ENCODE measurements at regions of chr3 and their contacts with region 1.

Region 1: GRCh38 chr3:79339846-79340245 is 428.0 kb downstream of the ROBO1 start:
- DNase-seq: no peak
- H3K4me3 ChIP-seq: no peak overlapping the region
- H3K27ac ChIP-seq: no peak overlapping the region
- H3K4me1 ChIP-seq: no peaks in the 10 kb centered on the region
- H3K27me3 ChIP-seq: no peaks in the 10 kb centered on the region
- CTCF ChIP-seq: no peak
- EP300 ChIP-seq: no peak
- POLR2A ChIP-seq: no peak

Region 2: GRCh38 chr3:79369306-79369705 is 29.5 kb after region 1 on chr3:
- intact Hi-C with region 1: no loop called
- DNase-seq: no peak
- H3K4me3 ChIP-seq: no peak overlapping the region
- H3K27ac ChIP-seq: no peak overlapping the region
- H3K4me1 ChIP-seq: no peaks in the 10 kb centered on the region
- H3K27me3 ChIP-seq: no peaks in the 10 kb centered on the region
- CTCF ChIP-seq: no peak
- EP300 ChIP-seq: no peak
- POLR2A ChIP-seq: no peak

Region 3: GRCh38 chr3:79473993-79474392 is 134.1 kb after region 1 on chr3:
- intact Hi-C with region 1: loop called in 1 of 4 experiments (anchors 5 kb)
- DNase-seq: no peak
- H3K4me3 ChIP-seq: no peak overlapping the region
- H3K27ac ChIP-seq: no peak overlapping the region
- H3K4me1 ChIP-seq: no peaks in the 10 kb centered on the region
- H3K27me3 ChIP-seq: no peaks in the 10 kb centered on the region
- CTCF ChIP-seq: no peak
- EP300 ChIP-seq: no peak
- POLR2A ChIP-seq: no peak

Measured in ovary (tissue), 10 donors.